CD4-positive, alpha-beta T cell (primary cell): ENCODE measurements at regions of chr1 and their contacts with region 1.

Region 1: DNA sequence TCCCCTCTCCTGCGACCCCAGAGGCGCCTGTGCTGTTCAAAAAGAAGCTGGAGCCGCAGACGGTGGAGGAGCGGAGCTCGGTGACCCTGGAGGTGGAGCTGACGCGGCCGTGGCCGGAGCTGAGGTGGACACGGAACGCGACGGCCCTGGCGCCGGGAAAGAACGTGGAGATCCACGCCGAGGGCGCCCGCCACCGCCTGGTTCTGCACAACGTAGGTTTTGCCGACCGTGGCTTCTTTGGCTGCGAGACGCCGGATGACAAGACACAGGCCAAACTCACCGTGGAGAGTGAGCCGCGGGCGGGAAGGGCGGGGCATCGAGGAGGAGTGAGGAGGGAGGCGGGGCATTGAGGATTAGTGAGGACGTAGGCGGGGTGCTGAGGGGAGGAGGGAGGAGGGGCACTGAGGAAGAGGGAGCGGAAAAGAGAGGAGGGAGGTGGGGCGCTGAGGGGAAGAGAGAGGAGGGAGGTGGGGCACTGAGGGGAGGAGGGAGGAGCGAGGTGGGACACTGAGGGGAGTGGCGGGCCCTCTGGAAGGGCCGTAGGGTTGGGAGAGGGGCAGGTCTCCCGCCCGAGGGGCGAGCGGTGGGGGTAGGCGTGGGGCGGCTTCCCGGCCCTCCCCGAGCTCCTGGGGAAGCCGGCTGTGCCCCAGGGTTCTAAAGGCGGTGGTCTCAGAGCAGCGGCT is 68.0 kb downstream of the OBSCN start:
- DNase-seq: peak; percentile 76 to 97 (median 90)
- ATAC-seq: peak; percentile 95
- H3K4me3 ChIP-seq: peak overlapping the region; percentile 75
- H3K4me3 Mint-ChIP-seq: peak overlapping the region; percentile 82
- H3K27ac ChIP-seq: peak overlapping the region; percentile 28 to 56
- H3K27ac Mint-ChIP-seq: peak overlapping the region; percentile 81
- H3K4me1 ChIP-seq: peaks cover 27% of the 10 kb centered on the region
- H3K4me1 Mint-ChIP-seq: peaks cover 14% of the 10 kb centered on the region
- H3K27me3 ChIP-seq: no peaks in the 10 kb centered on the region
- H3K27me3 Mint-ChIP-seq: no peaks in the 10 kb centered on the region
- CTCF ChIP-seq: no peak

Region 2: DNA sequence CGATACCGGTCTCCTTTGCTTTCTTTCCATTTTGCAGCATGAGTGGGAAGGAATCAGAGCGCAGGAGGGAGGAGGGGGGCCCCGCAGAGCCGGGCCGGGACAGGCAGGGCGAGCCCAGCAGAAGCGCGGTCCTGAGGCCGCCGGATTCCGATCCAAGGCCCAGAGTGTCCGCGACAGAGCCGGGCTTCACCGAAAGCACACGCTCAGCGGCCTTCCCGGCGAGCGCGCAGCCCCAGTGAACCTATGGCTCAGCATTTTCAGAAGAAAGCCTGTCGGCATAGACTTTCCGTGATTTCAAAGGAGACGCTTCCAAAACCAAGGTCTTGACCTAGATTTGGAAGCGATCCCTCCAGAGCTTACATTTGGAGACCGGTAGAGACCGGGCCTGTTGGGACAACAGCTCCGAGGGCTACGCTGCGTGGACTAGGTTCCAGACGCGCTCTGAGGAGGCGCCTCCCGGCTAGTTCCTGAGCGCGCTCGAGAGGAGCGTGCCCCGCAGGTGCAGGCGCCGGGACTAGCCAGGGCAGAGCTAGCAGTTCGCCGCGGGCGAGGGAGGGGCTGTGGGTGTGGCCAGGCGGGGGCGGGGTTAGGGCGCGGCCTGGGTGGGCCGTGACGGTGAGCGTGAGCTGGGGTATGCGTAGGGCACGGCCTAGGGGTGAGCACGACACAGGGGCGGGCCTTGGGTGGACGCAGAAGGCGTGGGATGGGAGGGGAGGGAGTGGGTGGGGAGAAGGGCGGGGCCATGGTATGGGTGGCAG is 488.2 kb before region 1 on chr1:
- CTCF ChIA-PET with region 1: no interaction called
- POLR2A ChIA-PET with region 1: no interaction called
- intact Hi-C with region 1: loop called in 1 of 2 experiments (anchors 10 kb)
- DNase-seq: peak; percentile 94 to 99 (median 96)
- ATAC-seq: peak; percentile 92
- H3K4me3 ChIP-seq: peak overlapping the region; percentile 74
- H3K4me3 Mint-ChIP-seq: peak overlapping the region; percentile 89
- H3K27ac ChIP-seq: peak overlapping the region in 1 of 2 donors; percentile 11
- H3K27ac Mint-ChIP-seq: peak overlapping the region; percentile 82
- H3K4me1 ChIP-seq: peaks cover 39% of the 10 kb centered on the region
- H3K4me1 Mint-ChIP-seq: peaks cover 34% of the 10 kb centered on the region
- H3K27me3 ChIP-seq: no peaks in the 10 kb centered on the region
- H3K27me3 Mint-ChIP-seq: no peaks in the 10 kb centered on the region
- CTCF ChIP-seq: no peak

Region 3: GRCh38 chr1:228118040-228118439 is 157.8 kb before region 1 on chr1:
- CTCF ChIA-PET with region 1: no interaction called
- POLR2A ChIA-PET with region 1: no interaction called
- intact Hi-C with region 1: no loop called
- DNase-seq: no peak
- ATAC-seq: no peak
- H3K4me3 ChIP-seq: no peak overlapping the region
- H3K4me3 Mint-ChIP-seq: no peak overlapping the region
- H3K27ac ChIP-seq: no peak overlapping the region
- H3K27ac Mint-ChIP-seq: no peak overlapping the region
- H3K4me1 ChIP-seq: no peaks in the 10 kb centered on the region
- H3K4me1 Mint-ChIP-seq: no peaks in the 10 kb centered on the region
- H3K27me3 ChIP-seq: no peaks in the 10 kb centered on the region
- H3K27me3 Mint-ChIP-seq: no peaks in the 10 kb centered on the region
- CTCF ChIP-seq: no peak

Region 4: GRCh38 chr1:228139944-228140656 is 135.8 kb before region 1 on chr1 and contains the start of gene GUK1:
- CTCF ChIA-PET with region 1: no interaction called
- POLR2A ChIA-PET with region 1: no interaction called
- intact Hi-C with region 1: loop called in 1 of 2 experiments (anchors 10 kb)
- DNase-seq: peak; percentile 99 to 100 (median 100)
- ATAC-seq: peak; percentile 88
- H3K4me3 ChIP-seq: peak within 1 kb of the TSS; percentile 78
- H3K4me3 Mint-ChIP-seq: peak within 1 kb of the TSS; percentile 90
- H3K27ac ChIP-seq: peak within 1 kb of the TSS; percentile 92 to 97
- H3K27ac Mint-ChIP-seq: peak within 1 kb of the TSS; percentile 94
- H3K4me1 ChIP-seq: peaks cover 51% of the 10 kb centered on the region
- H3K4me1 Mint-ChIP-seq: peaks cover 44% of the 10 kb centered on the region
- H3K27me3 ChIP-seq: no peaks in the 10 kb centered on the region
- H3K27me3 Mint-ChIP-seq: no peaks in the 10 kb centered on the region
- CTCF ChIP-seq: no peak
- total RNA-seq, gene GUK1: 373 to 378 TPM

Region 5: DNA sequence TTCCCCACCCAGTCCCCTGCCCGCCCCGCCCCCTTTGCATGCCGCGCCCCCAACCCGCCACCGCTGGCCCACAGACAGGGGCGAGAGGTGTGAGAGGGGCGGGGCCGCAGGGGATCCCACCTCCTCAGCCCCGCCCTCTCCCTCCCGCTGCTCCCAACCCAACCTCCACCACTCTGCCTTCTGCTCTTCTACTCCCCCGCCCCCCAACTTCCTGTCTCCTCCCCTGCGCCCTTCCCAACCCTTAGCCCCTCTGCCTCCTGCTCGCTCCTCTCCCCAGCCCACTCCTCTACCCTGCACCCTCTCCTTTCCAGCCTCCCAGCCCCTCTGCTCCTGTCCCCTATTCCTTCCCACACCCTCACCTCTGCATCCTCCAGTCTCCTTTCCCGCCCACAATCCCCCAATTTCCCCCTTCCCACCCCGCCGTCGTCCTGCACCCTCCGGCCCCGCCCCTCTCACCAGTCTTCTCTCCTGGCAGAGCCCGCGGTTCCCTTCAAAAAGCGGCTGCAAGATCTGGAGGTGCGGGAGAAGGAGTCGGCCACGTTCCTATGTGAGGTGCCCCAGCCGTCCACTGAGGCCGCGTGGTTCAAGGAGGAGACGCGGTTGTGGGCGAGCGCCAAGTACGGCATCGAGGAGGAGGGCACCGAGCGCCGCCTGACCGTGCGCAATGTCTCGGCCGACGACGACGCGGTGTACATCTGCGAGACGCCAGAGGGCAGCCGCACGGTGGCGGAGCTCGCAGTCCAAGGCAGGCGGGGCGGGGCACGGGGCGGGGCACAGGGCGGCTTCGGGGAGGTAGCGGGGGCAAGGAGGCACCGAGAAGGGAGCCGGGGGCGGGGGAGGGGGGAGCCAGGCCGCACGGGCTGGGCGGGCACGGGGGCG is 62.7 kb before region 1 on chr1:
- CTCF ChIA-PET with region 1: no interaction called
- POLR2A ChIA-PET with region 1: interaction called, 3 read pairs
- intact Hi-C with region 1: loop called (anchors 1 kb)
- DNase-seq: peak; percentile 83 to 96 (median 90)
- ATAC-seq: peak; percentile 89
- H3K4me3 ChIP-seq: peak overlapping the region; percentile 64
- H3K4me3 Mint-ChIP-seq: peak overlapping the region; percentile 92
- H3K27ac ChIP-seq: peak overlapping the region in 1 of 2 donors; percentile 21
- H3K27ac Mint-ChIP-seq: peak overlapping the region; percentile 86
- H3K4me1 ChIP-seq: peaks cover 22% of the 10 kb centered on the region
- H3K4me1 Mint-ChIP-seq: peaks cover 12% of the 10 kb centered on the region
- H3K27me3 ChIP-seq: no peaks in the 10 kb centered on the region
- H3K27me3 Mint-ChIP-seq: no peaks in the 10 kb centered on the region
- CTCF ChIP-seq: peak; percentile 59

Region 6: DNA sequence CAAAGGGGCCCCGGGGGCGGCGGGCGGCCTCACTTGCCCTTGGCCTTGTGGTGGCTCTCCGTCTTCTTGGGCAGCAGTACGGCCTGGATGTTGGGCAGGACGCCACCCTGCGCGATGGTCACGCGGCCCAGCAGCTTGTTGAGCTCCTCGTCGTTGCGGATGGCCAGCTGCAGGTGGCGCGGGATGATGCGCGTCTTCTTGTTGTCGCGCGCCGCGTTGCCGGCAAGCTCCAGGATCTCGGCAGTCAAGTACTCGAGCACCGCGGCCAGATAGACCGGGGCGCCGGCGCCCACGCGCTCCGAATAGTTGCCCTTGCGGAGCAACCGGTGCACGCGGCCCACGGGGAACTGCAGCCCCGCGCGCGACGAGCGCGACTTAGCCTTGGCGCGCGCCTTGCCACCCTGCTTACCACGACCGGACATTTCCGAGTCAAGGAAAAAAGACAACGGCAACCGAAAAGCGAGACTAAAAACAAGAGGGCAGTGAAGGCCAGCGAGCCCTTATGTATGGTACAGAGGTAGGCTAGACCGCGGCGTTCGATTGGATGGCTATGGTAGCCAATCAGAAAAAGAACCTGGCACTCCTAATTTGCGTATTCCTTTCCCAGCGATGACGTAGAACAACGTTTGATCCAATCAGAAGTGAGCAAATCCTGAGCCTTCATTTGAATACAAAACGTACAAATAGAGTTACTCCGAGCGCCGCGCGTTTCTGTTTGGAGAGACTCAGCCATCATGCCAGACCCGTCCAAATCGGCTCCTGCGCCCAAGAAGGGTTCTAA is 181.7 kb after region 1 on chr1:
- CTCF ChIA-PET with region 1: no interaction called
- POLR2A ChIA-PET with region 1: interaction called, 3 read pairs
- intact Hi-C with region 1: loop called in 1 of 2 experiments (anchors 5 kb)
- DNase-seq: peak; percentile 68 to 99 (median 76)
- ATAC-seq: peak; percentile 83
- H3K4me3 ChIP-seq: peak overlapping the region; percentile 67
- H3K4me3 Mint-ChIP-seq: peak overlapping the region; percentile 95
- H3K27ac ChIP-seq: peak overlapping the region; percentile 68 to 94
- H3K27ac Mint-ChIP-seq: peak overlapping the region; percentile 98
- H3K4me1 ChIP-seq: peaks cover 30% of the 10 kb centered on the region
- H3K4me1 Mint-ChIP-seq: peaks cover 54% of the 10 kb centered on the region
- H3K27me3 ChIP-seq: no peaks in the 10 kb centered on the region
- H3K27me3 Mint-ChIP-seq: peaks cover 5% of the 10 kb centered on the region
- CTCF ChIP-seq: no peak